ENCODE measurements at regions of chr17 and their contacts with region 1.

Region 1: GRCh38 chr17:63950941-63951507 is 18.9 kb upstream of the CD79B start:
- DNase-seq: no peak

Region 2: GRCh38 chr17:63819585-63820537 is 131.2 kb before region 1 on chr17:
- intact Hi-C with region 1: no loop called
- DNase-seq: no peak

Region 3: DNA sequence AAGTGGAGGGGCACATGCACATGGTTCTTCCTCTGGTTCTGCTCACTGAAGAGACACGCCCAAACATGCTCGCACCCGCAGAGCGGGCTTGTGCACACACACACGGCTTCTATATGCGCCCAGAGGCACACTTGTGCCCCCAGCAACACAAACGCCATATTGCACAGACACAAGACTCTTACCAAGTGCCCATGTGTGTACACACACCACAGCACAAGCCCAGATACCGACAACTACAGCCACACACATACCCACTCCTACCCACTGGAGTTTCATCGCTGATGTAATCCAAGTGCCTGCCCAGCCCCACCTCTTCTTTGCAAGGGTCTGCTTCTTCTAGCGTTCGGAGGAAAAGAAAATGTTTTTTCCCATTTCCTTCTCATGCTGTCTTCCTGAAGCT is 40.6 kb after region 1 on chr17:
- intact Hi-C with region 1: loop called in 1 of 2 experiments (anchors 1 kb)
- DNase-seq: peak; percentile 68

Measured in posterior vena cava (tissue), 2 donors.